Aorta (tissue), 5 donors: ENCODE measurements at regions of chr12 and their contacts with region 1.

Region 1: DNA sequence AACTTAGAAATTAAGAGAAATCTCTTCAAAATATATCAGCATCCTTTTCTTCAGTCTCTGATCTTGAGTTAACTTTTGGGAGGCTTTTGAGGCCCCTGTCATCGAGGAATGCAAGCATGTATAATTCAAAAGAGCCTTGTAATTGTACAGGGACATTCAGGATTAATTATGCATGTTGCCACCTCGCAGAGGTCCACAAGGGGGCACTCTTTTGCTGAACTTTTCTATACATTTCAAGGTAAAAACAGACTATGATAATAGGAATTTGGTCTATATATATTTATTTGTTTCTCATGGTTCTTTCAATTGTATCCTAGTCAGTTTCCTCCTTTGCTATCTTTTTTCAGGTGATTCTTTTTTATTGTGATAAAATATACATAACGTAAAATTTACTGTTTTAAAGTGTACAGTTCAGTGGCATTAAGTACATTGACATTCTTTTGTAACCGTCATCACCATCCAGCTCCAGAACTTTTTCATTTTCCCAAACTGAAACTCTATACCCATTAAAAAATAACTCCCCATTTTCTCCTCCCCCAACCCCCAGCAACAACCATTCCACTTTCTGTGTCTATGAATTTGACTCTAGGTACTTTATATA is 47.0 kb upstream of the SLC2A13 start:
- DNase-seq: peak in 1 of 2 donors; percentile 51
- ATAC-seq: peak; percentile 67
- H3K4me3 ChIP-seq: no peak overlapping the region
- H3K27ac ChIP-seq: no peak overlapping the region
- H3K4me1 ChIP-seq: no peaks in the 10 kb centered on the region
- H3K27me3 ChIP-seq: no peaks in the 10 kb centered on the region

Region 2: GRCh38 chr12:39365364-39366001 is 787.4 kb before region 1 on chr12:
- intact Hi-C with region 1: no loop called
- DNase-seq: no peak
- ATAC-seq: no peak
- H3K4me3 ChIP-seq: no peak overlapping the region
- H3K27ac ChIP-seq: no peak overlapping the region
- H3K4me1 ChIP-seq: no peaks in the 10 kb centered on the region
- H3K27me3 ChIP-seq: no peaks in the 10 kb centered on the region

Region 3: DNA sequence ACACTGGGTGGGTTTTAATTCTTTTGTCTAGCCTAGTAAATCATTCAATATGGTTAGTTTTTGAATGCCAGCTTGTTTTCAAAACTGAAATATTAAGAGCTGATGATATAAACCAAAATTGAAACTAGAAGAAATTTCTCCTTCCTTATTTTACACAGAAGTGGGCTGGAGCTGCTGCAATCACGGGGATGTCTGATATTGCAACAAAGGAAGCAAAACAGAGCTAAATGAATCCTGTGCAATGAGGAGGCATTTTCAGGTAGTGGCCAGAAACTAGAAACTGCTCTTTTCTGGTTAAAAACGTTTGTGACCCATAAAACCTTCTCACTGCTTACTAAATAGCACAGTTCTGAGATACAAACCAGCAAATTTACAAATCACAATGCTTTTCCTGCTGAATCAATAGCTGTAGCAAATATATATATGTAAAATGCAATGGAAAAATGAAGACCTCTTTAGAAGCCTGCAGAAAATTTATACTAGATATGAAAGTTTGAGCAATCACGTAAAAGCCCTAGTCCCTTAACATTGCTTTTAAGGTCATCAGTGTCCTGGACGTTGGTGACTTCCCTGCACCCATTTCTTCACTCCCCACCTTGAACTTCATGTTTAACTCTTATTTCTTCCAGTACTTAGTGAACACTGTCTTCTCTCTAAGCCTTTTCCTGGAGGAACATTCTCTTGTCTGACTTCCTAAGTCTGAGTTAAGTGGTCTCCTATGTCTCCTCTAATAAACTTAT is 56.0 kb after region 1 on chr12:
- intact Hi-C with region 1: no loop called
- DNase-seq: peak in 1 of 2 donors; percentile 59
- ATAC-seq: no peak
- H3K4me3 ChIP-seq: no peak overlapping the region
- H3K27ac ChIP-seq: no peak overlapping the region
- H3K4me1 ChIP-seq: no peaks in the 10 kb centered on the region
- H3K27me3 ChIP-seq: no peaks in the 10 kb centered on the region

Region 4: GRCh38 chr12:40224439-40225291 is 71.8 kb after region 1 on chr12 and contains the start of gene LRRK2:
- intact Hi-C with region 1: loop called (anchors 2 to 5 kb)
- DNase-seq: peak; percentile 93 to 94
- ATAC-seq: peak; percentile 90
- H3K4me3 ChIP-seq: peak within 1 kb of the TSS; percentile 48 to 79
- H3K27ac ChIP-seq: peak within 1 kb of the TSS; percentile 51 to 71
- H3K4me1 ChIP-seq: no peaks in the 10 kb centered on the region
- H3K27me3 ChIP-seq: no peaks in the 10 kb centered on the region
- total RNA-seq, gene LRRK2: 23.3 to 42.0 TPM

Region 5: GRCh38 chr12:40312982-40313576 is 160.2 kb after region 1 on chr12:
- intact Hi-C with region 1: loop called (anchors 2 to 5 kb)
- DNase-seq: no peak
- ATAC-seq: no peak
- H3K4me3 ChIP-seq: no peak overlapping the region
- H3K27ac ChIP-seq: no peak overlapping the region
- H3K4me1 ChIP-seq: no peaks in the 10 kb centered on the region
- H3K27me3 ChIP-seq: no peaks in the 10 kb centered on the region